ENCODE measurements at regions of chr6 and their contacts with region 1.

Region 1: GRCh38 chr6:42745707-42746462 is at the start of gene TBCC:
- DNase-seq: peak; percentile 95
- ATAC-seq: peak; percentile 79
- H3K4me3 ChIP-seq: peak within 1 kb of the TSS; percentile 88 to 99
- H3K27ac ChIP-seq: peak within 1 kb of the TSS; percentile 79
- H3K4me1 ChIP-seq: peaks cover 11 to 28% of the 10 kb centered on the region in 2 experiments
- H3K27me3 ChIP-seq: no peaks in the 10 kb centered on the region
- CTCF ChIP-seq: no peak
- POLR2A ChIP-seq: peak; percentile 87
- RAD21 ChIP-seq: no peak
- total RNA-seq, gene TBCC: 17.1 TPM

Region 2: GRCh38 chr6:42402184-42402583 is 343.7 kb before region 1 on chr6:
- CTCF ChIA-PET with region 1: no interaction called
- POLR2A ChIA-PET with region 1: no interaction called
- RAD21 ChIA-PET with region 1: no interaction called
- intact Hi-C with region 1: no loop called
- DNase-seq: peak; percentile 58
- ATAC-seq: peak; percentile 52
- H3K4me3 ChIP-seq: peak overlapping the region in 1 of 2 experiments; percentile 25; a peak in 2 of 4 replicates
- H3K27ac ChIP-seq: peak overlapping the region; percentile 86
- H3K4me1 ChIP-seq: peaks cover 54 to 61% of the 10 kb centered on the region in 2 experiments
- H3K27me3 ChIP-seq: no peaks in the 10 kb centered on the region
- CTCF ChIP-seq: no peak
- POLR2A ChIP-seq: no peak
- RAD21 ChIP-seq: no peak

Region 3: GRCh38 chr6:42782622-42783176 is 36.8 kb after region 1 on chr6:
- CTCF ChIA-PET with region 1: no interaction called
- POLR2A ChIA-PET with region 1: interaction called, 22 read pairs
- RAD21 ChIA-PET with region 1: interaction called, 3 read pairs
- intact Hi-C with region 1: loop called (anchors 1 kb)
- DNase-seq: peak; percentile 56
- ATAC-seq: peak; percentile 60
- H3K4me3 ChIP-seq: peak overlapping the region; percentile 63 to 74
- H3K27ac ChIP-seq: peak overlapping the region; percentile 100
- H3K4me1 ChIP-seq: peaks cover 21 to 50% of the 10 kb centered on the region in 2 experiments
- H3K27me3 ChIP-seq: no peaks in the 10 kb centered on the region
- CTCF ChIP-seq: no peak
- POLR2A ChIP-seq: no peak
- RAD21 ChIP-seq: no peak

Region 4: GRCh38 chr6:42890311-42891198 is 144.7 kb after region 1 on chr6:
- CTCF ChIA-PET with region 1: no interaction called
- POLR2A ChIA-PET with region 1: no interaction called
- RAD21 ChIA-PET with region 1: no interaction called
- intact Hi-C with region 1: loop called (anchors 5 kb)
- DNase-seq: peak; percentile 89
- ATAC-seq: peak; percentile 90
- H3K4me3 ChIP-seq: peak overlapping the region; percentile 87 to 93
- H3K27ac ChIP-seq: peak overlapping the region; percentile 98
- H3K4me1 ChIP-seq: peaks cover 3 to 18% of the 10 kb centered on the region in 2 experiments; a peak in 3 of 4 replicates
- H3K27me3 ChIP-seq: no peaks in the 10 kb centered on the region
- CTCF ChIP-seq: no peak
- POLR2A ChIP-seq: peak; percentile 60
- RAD21 ChIP-seq: no peak

Region 5: GRCh38 chr6:43086022-43086658 is 340.3 kb after region 1 on chr6:
- CTCF ChIA-PET with region 1: no interaction called
- POLR2A ChIA-PET with region 1: no interaction called
- RAD21 ChIA-PET with region 1: no interaction called
- intact Hi-C with region 1: no loop called
- DNase-seq: no peak
- ATAC-seq: no peak
- H3K4me3 ChIP-seq: no peak overlapping the region
- H3K27ac ChIP-seq: no peak overlapping the region
- H3K4me1 ChIP-seq: peaks cover 24 to 47% of the 10 kb centered on the region in 2 experiments
- H3K27me3 ChIP-seq: no peaks in the 10 kb centered on the region
- CTCF ChIP-seq: no peak
- POLR2A ChIP-seq: no peak
- RAD21 ChIP-seq: no peak

Measured in HCT116 (cell line).